Cardiac septum (tissue), 1 donor: ENCODE measurements at regions of chr6 and their contacts with region 1.

Region 1: GRCh38 chr6:117265410-117266256 is at the start of gene VGLL2:
- DNase-seq: no peak
- total RNA-seq, gene VGLL2: 38.1 TPM

Region 2: DNA sequence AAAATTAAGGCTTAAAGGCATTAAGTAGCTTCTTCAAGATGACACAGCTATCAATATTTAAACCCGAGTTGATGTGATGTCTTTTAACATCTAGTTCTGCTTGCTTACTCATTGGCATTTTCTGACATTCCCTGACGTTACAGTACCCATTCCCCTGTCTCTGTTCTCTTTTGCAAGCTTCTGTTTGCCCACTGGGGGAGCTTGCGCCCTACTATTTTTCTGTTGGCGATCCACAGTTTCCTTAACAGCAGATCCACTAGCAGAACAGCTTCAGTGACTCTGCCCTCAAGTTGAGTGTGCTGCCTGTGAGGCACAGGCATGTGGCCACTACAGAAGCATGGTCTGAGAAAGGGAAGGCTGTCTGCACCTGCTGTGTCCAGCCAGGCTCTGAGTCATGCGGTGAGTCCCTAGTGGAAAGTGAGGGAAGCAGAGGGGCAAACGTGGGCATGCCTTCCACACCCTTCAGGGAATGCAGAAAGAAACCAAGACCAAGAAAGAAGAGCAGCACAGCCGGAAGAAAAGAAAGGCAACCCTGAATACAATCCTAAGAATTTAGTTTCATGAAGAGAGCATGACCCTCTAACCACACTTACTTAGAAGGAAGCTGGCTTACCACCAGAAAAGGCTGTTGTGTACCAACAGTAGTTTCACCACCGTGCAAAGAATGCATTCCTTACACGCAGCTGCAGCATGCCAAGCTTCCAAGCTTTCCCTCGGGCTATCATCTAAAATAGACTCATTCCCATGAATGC is 97.9 kb before region 1 on chr6:
- intact Hi-C with region 1: loop called (anchors 10 kb)
- DNase-seq: no peak

Region 3: GRCh38 chr6:117194978-117195377 is 70.7 kb before region 1 on chr6:
- intact Hi-C with region 1: loop called (anchors 5 kb)
- DNase-seq: no peak